Activated naive CD8-positive, alpha-beta T cell treated with anti-CD3 and anti-CD28 coated beads, Interleukin-2, amount 10 ng/mL, durations not matched to agents 7 days and 5 days (primary cell): ENCODE measurements at regions of chr2 and their contacts with region 1.

Region 1: DNA sequence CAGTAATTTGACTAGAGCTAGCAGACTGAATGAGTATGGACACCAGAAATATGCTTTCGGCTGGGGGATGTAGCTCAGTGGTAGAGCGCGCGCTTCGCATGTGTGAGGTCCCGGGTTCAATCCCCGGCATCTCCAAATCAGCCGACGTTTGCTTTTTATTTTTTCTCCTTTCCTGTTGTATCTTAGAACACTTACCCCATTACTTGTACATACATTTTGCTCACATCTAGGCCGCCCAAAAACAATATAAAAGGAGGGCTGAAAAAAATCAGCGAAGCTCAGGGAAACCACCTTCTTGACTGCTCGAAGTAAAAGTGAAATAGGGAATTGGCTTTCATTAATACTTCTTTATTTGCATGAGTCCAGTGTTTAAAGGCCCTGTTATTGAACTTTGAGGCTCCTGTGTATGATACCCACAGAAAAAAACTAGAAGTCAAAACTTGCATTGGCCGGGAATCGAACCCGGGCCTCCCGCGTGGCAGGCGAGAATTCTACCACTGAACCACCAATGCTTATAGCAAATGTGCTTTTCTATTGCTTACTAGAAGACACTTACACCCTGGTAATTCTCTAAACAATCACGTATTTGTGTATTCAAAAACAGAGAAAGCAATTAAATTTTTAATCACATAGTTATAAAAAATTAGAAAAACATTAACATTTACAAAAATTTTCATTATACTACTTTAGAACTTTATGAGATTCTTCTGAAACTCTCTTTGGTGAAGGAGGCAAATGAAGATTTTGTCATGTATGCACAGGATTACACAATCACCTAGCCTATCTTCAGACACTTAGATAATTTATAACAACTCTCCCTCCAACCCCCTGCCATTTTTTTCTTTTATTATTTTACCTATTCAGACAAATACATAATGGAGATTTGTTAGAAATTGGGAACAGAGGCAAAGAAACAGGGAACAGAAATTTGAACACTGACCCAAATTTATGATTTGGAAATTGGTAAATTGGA is 35.2 kb upstream of the GPD2 start:
- DNase-seq: peak; percentile 79
- ATAC-seq: peak; percentile 80
- H3K4me3 Mint-ChIP-seq: peak overlapping the region; percentile 84
- H3K27ac Mint-ChIP-seq: peak overlapping the region; percentile 88
- H3K4me1 Mint-ChIP-seq: peaks cover 26% of the 10 kb centered on the region
- H3K27me3 Mint-ChIP-seq: no peaks in the 10 kb centered on the region

Region 2: GRCh38 chr2:156332534-156333273 is 68.3 kb before region 1 on chr2 and contains the start of gene NR4A2:
- POLR2A ChIA-PET with region 1: interaction called, 21 read pairs
- DNase-seq: peak; percentile 84
- ATAC-seq: peak; percentile 65
- H3K4me3 Mint-ChIP-seq: peak within 1 kb of the TSS; percentile 88
- H3K27ac Mint-ChIP-seq: peak within 1 kb of the TSS; percentile 81
- H3K4me1 Mint-ChIP-seq: peaks cover 39% of the 10 kb centered on the region
- H3K27me3 Mint-ChIP-seq: peaks cover 27% of the 10 kb centered on the region
- total RNA-seq, gene NR4A2: 3.0 to 3.2 TPM

Region 3: DNA sequence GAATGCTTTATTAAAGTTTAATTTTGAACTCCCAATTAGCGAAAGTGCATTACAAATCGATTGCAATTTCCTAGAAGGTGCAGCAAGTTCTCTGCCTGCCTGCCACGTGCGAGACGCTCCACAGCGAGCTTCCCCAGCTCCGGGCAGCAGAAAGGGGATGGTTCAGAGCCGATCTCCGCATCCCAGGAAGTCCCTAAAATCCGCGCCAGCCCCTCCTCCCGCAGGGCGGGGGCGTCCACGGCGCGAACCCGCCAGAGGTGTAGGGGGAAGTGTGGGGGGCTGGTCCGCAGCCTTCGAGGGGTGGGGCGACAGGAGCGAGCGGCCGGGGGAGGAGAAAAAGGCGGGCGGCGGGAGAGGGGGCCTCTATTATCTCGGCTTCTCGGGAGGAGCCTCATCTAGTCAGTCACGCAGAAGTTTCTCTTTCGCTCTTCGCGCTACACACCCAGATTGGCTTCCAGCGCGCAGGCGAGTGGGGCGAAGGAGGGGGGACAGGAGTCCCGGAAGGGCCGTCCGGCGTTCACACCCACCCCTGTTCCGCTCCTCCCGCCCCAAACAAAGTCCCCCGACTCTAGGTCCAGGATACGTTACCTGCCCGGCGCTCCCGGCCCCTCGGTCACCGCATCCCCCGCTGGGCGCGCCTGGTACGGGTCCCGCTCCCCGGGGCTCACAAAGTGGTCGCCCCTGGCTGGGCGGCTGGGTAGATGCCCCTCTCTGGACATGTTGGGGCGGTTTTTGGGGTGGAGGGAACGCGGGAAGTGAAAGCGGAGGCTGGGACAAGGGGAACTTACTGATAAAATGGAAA is 59.3 kb before region 1 on chr2:
- POLR2A ChIA-PET with region 1: interaction called, 14 read pairs
- DNase-seq: peak; percentile 85
- ATAC-seq: peak; percentile 81
- H3K4me3 Mint-ChIP-seq: peak overlapping the region; percentile 95
- H3K27ac Mint-ChIP-seq: peak overlapping the region; percentile 97
- H3K4me1 Mint-ChIP-seq: peaks cover 31% of the 10 kb centered on the region
- H3K27me3 Mint-ChIP-seq: no peaks in the 10 kb centered on the region